Naive thymus-derived CD4-positive, alpha-beta T cell (primary cell): ENCODE measurements at regions of chr17 and their contacts with region 1.

Region 1: DNA sequence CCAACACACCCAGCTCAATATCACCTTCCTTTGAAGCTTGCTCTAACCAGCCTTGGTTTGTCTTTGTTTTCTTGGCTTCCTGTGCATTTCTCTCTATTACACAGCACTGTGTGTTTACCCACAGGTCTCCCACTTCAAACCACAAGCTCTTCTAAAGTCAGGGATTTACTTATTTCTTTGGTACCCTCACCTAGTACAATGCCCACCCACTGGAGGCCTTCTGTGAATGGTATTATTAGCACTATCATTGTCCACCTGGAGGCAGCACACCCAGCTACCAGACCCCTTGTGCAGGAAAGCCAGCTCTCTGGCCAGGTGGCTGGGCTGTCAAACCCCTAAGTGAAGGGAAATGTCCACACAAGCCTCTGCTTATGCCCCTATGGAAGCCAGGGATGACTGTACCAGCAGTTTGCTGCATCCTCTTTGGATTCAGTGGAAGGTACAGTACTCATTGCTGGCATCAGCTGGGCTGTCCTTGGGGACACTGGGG is 9.4 kb upstream of the TOP2A start:
- DNase-seq: peak in 6 of 9 donors; percentile 32 to 61 (median 54)
- ATAC-seq: peak; percentile 86
- H3K4me3 ChIP-seq: peak overlapping the region; percentile 31
- H3K4me3 Mint-ChIP-seq: peak overlapping the region; percentile 26 to 78 (median 70)
- H3K27ac ChIP-seq: no peak overlapping the region
- H3K27ac Mint-ChIP-seq: peak overlapping the region in 8 of 9 donors; percentile 6 to 86 (median 25)
- H3K4me1 ChIP-seq: peaks cover 24 to 25% of the 10 kb centered on the region in 2 donors
- H3K4me1 Mint-ChIP-seq: peaks cover 22 to 40% (median 30%) of the 10 kb centered on the region in 7 donors
- H3K27me3 ChIP-seq: no peaks in the 10 kb centered on the region
- H3K27me3 Mint-ChIP-seq: peaks cover 0 to 14% (median 0%) of the 10 kb centered on the region in 5 donors

Region 2: GRCh38 chr17:40378966-40379365 is 48.1 kb before region 1 on chr17:
- CTCF ChIA-PET with region 1: no interaction called
- POLR2A ChIA-PET with region 1: no interaction called
- intact Hi-C with region 1: no loop called
- DNase-seq: no peak
- ATAC-seq: no peak
- H3K4me3 ChIP-seq: no peak overlapping the region
- H3K4me3 Mint-ChIP-seq: no peak overlapping the region
- H3K27ac ChIP-seq: no peak overlapping the region
- H3K27ac Mint-ChIP-seq: no peak overlapping the region
- H3K4me1 ChIP-seq: no peaks in the 10 kb centered on the region
- H3K4me1 Mint-ChIP-seq: peaks cover 0 to 7% (median 5%) of the 10 kb centered on the region in 7 donors
- H3K27me3 ChIP-seq: no peaks in the 10 kb centered on the region
- H3K27me3 Mint-ChIP-seq: peaks cover 0 to 5% (median 4%) of the 10 kb centered on the region in 5 donors

Region 3: GRCh38 chr17:40443583-40444327 is 16.7 kb after region 1 on chr17:
- CTCF ChIA-PET with region 1: interaction called, 5 read pairs
- POLR2A ChIA-PET with region 1: interaction called, 8 read pairs
- intact Hi-C with region 1: loop called in 1 of 2 experiments (anchors 2 kb)
- DNase-seq: peak; percentile 40 to 80 (median 61)
- ATAC-seq: peak; percentile 87
- H3K4me3 ChIP-seq: peak overlapping the region; percentile 21
- H3K4me3 Mint-ChIP-seq: peak overlapping the region; percentile 65 to 90 (median 84)
- H3K27ac ChIP-seq: peak overlapping the region; percentile 1
- H3K27ac Mint-ChIP-seq: peak overlapping the region in 8 of 9 donors; percentile 60 to 93 (median 78)
- H3K4me1 ChIP-seq: peaks cover 25 to 27% of the 10 kb centered on the region in 2 donors
- H3K4me1 Mint-ChIP-seq: peaks cover 30 to 58% (median 33%) of the 10 kb centered on the region in 7 donors
- H3K27me3 ChIP-seq: no peaks in the 10 kb centered on the region
- H3K27me3 Mint-ChIP-seq: peaks cover 0 to 5% (median 0%) of the 10 kb centered on the region in 5 donors